ENCODE measurements at regions of chr2 and their contacts with region 1.

Region 1: DNA sequence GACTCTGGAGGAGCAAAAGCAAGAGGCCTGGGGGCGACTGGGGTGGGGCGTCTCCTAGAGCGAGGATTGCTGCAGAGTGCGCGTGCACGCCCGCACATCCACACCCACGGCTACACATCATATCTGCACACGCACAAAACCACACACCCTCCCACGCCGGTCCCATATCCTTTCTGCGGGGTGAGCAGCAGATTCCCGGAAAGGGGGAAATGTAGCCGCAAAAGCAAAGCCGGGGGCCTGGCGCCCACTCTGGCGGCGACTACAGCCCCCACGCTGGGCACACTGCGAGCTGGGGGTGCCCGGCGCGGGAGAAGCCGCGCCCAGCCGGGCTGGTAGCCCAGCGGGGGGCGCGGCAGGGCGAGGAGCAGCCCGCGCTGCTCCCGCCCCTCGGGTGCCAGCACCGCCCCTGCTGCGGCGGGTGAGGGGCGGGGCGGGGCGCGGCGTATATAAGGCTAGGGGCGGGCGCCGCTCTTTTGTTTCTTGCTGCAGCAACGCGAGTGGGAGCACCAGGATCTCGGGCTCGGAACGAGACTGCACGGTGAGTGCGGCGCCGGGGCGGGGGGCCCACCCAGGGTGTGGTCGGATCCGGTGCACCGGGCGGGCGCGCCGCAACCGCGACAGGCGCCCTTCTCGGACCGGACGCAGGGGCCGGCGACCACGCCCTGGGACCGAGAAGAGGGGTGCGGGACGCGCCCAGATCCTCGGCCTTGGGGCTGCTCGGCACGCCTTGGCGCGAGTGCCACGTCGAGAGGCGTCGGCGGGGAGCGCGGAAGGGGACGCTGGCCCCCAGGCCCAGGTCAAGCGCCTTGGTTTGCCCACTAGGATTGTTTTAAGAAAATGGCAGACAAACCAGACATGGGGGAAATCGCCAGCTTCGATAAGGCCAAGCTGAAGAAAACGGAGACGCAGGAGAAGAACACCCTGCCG is at the start of gene TMSB10:
- DNase-seq: peak; percentile 87
- ATAC-seq: peak; percentile 59
- H3K4me3 ChIP-seq: peak within 1 kb of the TSS; percentile 83
- H3K27ac ChIP-seq: peak within 1 kb of the TSS; percentile 62
- H3K4me1 ChIP-seq: peaks cover 13% of the 10 kb centered on the region
- H3K27me3 ChIP-seq: no peaks in the 10 kb centered on the region
- CTCF ChIP-seq: peak; percentile 32; the same call in 1 of the 2 replicates
- total RNA-seq, gene TMSB10: 4,758 and 5,246 TPM in 2 replicates

Region 2: DNA sequence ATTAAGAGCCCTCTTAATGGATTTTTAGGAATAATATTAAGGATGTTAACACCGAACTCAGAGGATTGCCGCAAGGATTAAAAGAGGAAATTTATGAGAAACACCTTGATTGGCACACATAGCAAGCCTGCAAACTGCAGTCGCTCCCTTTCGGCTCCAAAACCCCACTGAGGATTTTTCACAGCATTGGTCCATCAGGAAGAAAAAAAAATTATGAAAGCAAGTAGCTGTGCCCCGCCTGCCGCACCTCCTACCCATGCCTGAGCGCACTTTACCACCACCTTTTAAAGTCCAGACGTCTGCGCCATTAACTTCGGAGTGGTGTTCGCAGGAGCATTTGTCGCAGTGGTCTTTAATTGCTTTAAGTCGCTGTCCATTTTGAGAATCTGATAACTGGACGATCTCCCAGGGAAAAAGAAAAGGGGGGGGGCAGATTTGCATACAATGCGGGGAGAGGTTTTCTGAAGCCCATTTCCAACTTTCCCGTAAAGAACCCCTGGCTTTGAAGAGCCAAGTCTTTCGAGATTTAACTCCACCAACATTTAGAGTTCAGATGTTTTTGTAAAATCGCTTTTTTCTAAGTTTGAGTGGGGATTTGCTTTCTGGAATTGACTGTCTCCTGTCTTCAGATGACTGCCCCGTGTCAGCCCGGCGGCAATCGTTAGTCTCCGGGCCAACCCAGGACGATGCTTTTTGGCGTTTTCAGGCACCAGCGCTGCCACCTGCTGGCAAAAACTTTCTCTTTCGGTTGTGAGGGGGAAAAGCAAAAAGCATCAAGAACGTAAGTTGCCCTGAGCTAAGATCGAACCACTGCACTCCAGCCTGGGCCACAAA is 23.6 kb before region 1 on chr2:
- CTCF ChIA-PET with region 1: no interaction called
- POLR2A ChIA-PET with region 1: no interaction called
- intact Hi-C with region 1: loop called (anchors 2 kb)
- DNase-seq: peak; percentile 91
- ATAC-seq: peak; percentile 90
- H3K4me3 ChIP-seq: peak overlapping the region; percentile 77
- H3K27ac ChIP-seq: no peak overlapping the region
- H3K4me1 ChIP-seq: peaks cover 5% of the 10 kb centered on the region
- H3K27me3 ChIP-seq: peaks cover 15% of the 10 kb centered on the region
- CTCF ChIP-seq: peak; percentile 87

Region 3: DNA sequence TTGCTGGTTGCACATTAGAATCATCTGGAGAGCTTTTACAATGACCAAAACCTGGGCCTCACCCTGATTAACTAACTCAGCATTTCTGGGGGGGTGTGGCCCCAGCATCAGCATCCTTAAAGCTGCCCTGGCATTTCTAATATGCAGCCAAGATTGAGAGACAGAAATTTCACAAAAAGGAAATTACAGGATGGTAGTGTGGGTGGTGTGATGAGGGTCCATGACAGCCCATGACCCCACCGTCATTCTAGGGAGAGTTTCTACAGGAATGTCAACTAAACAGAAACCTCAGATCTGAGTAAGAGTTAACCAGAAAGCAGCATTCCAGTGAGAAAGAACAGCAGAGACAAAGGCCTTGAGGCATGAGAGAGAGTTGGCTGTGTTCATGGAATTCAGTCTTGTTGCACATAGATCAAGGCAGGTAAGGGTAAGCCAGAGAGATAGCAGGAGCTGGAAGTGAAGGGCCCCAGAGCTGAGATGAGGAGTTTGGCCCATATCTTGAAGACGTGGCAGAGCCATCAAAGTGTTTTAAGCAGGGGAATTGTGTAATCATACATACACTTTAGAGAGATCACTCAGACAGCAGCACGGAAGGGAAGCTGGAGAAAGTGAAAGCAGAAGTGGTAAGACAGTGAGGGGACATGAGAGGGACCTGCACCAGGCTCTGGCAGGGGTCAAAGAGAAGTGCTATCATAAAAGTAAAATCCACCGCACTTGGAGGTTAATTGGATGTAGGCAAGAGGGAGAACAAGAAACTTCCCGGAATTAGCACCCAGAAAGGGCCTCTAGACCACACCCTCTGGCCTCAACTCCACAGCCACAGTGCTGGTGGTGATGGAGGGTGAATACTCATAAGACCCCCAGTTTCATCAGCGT is 16.8 kb before region 1 on chr2:
- CTCF ChIA-PET with region 1: no interaction called
- POLR2A ChIA-PET with region 1: interaction called, 14 read pairs
- intact Hi-C with region 1: loop called (anchors 2 kb)
- DNase-seq: no peak
- ATAC-seq: no peak
- H3K4me3 ChIP-seq: no peak overlapping the region
- H3K27ac ChIP-seq: no peak overlapping the region
- H3K4me1 ChIP-seq: no peaks in the 10 kb centered on the region
- H3K27me3 ChIP-seq: no peaks in the 10 kb centered on the region
- CTCF ChIP-seq: no peak

Region 4: GRCh38 chr2:84919885-84920580 is 14.6 kb after region 1 on chr2:
- CTCF ChIA-PET with region 1: interaction called, 11 read pairs
- POLR2A ChIA-PET with region 1: interaction called, 15 read pairs
- intact Hi-C with region 1: no loop called
- DNase-seq: peak; percentile 97
- ATAC-seq: peak; percentile 97
- H3K4me3 ChIP-seq: peak overlapping the region; percentile 60
- H3K27ac ChIP-seq: peak overlapping the region; percentile 94
- H3K4me1 ChIP-seq: peaks cover 21% of the 10 kb centered on the region
- H3K27me3 ChIP-seq: no peaks in the 10 kb centered on the region
- CTCF ChIP-seq: no peak

Region 5: GRCh38 chr2:85248773-85249509 is 343.5 kb after region 1 on chr2:
- CTCF ChIA-PET with region 1: no interaction called
- POLR2A ChIA-PET with region 1: interaction called, 13 read pairs
- intact Hi-C with region 1: no loop called
- DNase-seq: peak; percentile 92
- ATAC-seq: peak; percentile 95
- H3K4me3 ChIP-seq: peak overlapping the region; percentile 40; the same call in 1 of the 2 replicates
- H3K27ac ChIP-seq: peak overlapping the region; percentile 76
- H3K4me1 ChIP-seq: peaks cover 20% of the 10 kb centered on the region
- H3K27me3 ChIP-seq: no peaks in the 10 kb centered on the region
- CTCF ChIP-seq: no peak